ENCODE measurements at regions of chr3 and their contacts with region 1.

Region 1: GRCh38 chr3:71942432-71943187 is 157.7 kb upstream of the PROK2 start:
- DNase-seq: peak; percentile 29
- ATAC-seq: peak; percentile 94
- H3K4me3 Mint-ChIP-seq: no peak overlapping the region
- H3K27ac Mint-ChIP-seq: no peak overlapping the region
- H3K4me1 Mint-ChIP-seq: peaks cover 10% of the 10 kb centered on the region
- H3K27me3 Mint-ChIP-seq: peaks cover 26% of the 10 kb centered on the region
- CTCF ChIP-seq: no peak

Region 2: DNA sequence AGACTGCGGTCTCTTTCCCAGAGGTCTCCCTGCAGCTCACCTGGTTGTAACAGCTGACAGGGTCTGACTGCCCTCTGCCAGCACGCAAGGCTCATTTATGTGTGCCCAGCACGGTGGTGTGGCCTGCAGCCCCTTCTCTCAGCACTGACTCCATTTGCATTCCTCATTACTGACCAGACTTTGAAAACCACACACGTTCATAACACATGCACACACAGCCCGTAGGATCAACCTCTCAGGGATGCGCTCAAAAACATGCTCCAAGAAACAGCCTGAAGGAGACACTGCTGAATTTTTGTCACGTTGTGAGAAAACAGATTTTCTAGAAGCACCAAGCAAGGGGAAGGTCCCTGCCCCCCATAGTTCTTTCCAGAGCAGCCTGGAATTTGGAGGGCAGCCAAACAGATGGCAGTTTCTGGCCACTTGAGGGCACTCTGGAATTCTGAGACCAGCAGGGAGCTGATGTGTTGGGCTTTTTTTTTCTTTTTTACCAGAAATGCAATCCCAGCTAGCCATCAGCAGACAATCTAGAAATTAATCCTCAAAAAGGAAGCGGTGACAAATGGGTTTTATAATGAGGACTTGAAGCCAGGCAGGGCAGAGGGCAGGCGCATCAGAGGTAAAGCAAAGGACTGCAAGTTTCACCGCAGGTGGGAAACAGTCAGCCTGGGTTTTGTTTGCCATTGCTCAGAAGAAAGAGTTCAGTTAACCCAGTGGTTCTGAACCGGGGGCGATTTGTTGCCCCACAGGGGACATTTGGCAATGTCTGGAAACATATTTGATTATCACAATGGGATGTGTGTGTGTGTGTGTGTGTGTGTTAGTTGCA is 12.8 kb after region 1 on chr3:
- CTCF ChIA-PET with region 1: interaction called, 22 read pairs
- POLR2A ChIA-PET with region 1: no interaction called
- DNase-seq: peak; percentile 64
- ATAC-seq: peak; percentile 78
- H3K4me3 Mint-ChIP-seq: no peak overlapping the region
- H3K27ac Mint-ChIP-seq: no peak overlapping the region; the same call in 1 of the 2 replicates
- H3K4me1 Mint-ChIP-seq: peaks cover 40% of the 10 kb centered on the region
- H3K27me3 Mint-ChIP-seq: no peaks in the 10 kb centered on the region
- CTCF ChIP-seq: peak; percentile 23; the same call in 1 of the 2 replicates

Region 3: GRCh38 chr3:72031581-72031980 is 89.0 kb after region 1 on chr3:
- CTCF ChIA-PET with region 1: no interaction called
- POLR2A ChIA-PET with region 1: no interaction called
- DNase-seq: no peak
- ATAC-seq: no peak
- H3K4me3 Mint-ChIP-seq: no peak overlapping the region
- H3K27ac Mint-ChIP-seq: peak overlapping the region; percentile 74; the same call in 1 of the 2 replicates
- H3K4me1 Mint-ChIP-seq: peaks cover 38% of the 10 kb centered on the region
- H3K27me3 Mint-ChIP-seq: no peaks in the 10 kb centered on the region; the same call in 1 of the 2 replicates
- CTCF ChIP-seq: no peak

Region 4: GRCh38 chr3:72255791-72256559 is 313.4 kb after region 1 on chr3:
- CTCF ChIA-PET with region 1: no interaction called
- POLR2A ChIA-PET with region 1: no interaction called
- DNase-seq: no peak
- ATAC-seq: peak; percentile 74
- H3K4me3 Mint-ChIP-seq: no peak overlapping the region
- H3K27ac Mint-ChIP-seq: no peak overlapping the region
- H3K4me1 Mint-ChIP-seq: peaks cover 25% of the 10 kb centered on the region
- H3K27me3 Mint-ChIP-seq: no peaks in the 10 kb centered on the region; the same call in 1 of the 2 replicates
- CTCF ChIP-seq: no peak